Dorsolateral prefrontal cortex (tissue), 120 donors: ENCODE measurements at regions of chr7 and their contacts with region 1.

Region 1: GRCh38 chr7:38107486-38107893 is 70.6 kb upstream of the STARD3NL start:
- DNase-seq: peak in 8 of 10 donors; percentile 32 to 70 (median 55)
- H3K4me3 ChIP-seq: no peak overlapping the region
- H3K27ac ChIP-seq: no peak overlapping the region
- H3K27me3 ChIP-seq: no peaks in the 10 kb centered on the region
- CTCF ChIP-seq: peak; percentile 61 to 96 (median 83)

Region 2: DNA sequence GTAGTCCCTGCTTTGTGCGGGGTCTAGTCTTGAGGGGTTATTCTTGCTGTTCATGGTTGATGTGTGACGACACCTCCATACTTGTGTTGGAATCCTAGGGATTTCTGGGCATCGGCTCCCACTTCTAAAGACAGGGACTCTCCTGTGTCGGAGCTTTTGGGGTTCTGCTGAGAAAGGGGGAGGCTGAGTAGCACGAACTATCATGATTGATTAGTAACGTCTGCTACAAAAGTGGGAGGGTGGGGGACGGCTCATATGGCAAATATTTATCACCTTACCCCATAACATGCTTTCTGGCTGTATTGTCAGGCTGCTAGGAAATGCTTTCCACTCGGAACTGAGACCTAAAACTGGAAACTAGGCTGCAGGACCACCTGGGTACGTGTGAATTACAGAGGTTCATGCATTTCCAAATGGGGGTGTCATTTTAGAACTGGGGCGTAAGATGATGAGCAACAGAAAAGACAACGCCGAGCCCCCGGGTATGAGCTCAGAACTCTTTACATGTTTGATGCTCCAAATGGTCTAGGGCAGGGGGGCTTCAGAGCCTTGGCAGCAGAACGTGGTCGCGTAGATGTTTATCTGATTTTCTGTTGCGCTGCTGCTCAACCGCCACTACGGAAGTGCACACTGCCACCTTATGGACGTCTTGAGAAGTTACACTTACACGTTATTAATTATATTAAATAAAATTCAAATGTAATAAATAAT is 274.2 kb before region 1 on chr7:
- intact Hi-C with region 1: no loop called
- DNase-seq: peak in 7 of 10 donors; percentile 28 to 57 (median 38)
- H3K4me3 ChIP-seq: peak overlapping the region; percentile 22 to 71 (median 53)
- H3K27ac ChIP-seq: peak overlapping the region in 39 of 59 donors; percentile 4 to 88 (median 49)
- H3K27me3 ChIP-seq: peaks cover 0 to 4% (median 0%) of the 10 kb centered on the region in 45 donors
- CTCF ChIP-seq: peak; percentile 73 to 94 (median 84)

Region 3: GRCh38 chr7:37901236-37901827 is 206.2 kb before region 1 on chr7:
- intact Hi-C with region 1: loop called in 1 of 2 experiments (anchors 5 kb)
- DNase-seq: no peak
- H3K4me3 ChIP-seq: no peak overlapping the region
- H3K27ac ChIP-seq: no peak overlapping the region
- H3K27me3 ChIP-seq: no peaks in the 10 kb centered on the region
- CTCF ChIP-seq: peak; percentile 43 to 83 (median 66)

Region 4: DNA sequence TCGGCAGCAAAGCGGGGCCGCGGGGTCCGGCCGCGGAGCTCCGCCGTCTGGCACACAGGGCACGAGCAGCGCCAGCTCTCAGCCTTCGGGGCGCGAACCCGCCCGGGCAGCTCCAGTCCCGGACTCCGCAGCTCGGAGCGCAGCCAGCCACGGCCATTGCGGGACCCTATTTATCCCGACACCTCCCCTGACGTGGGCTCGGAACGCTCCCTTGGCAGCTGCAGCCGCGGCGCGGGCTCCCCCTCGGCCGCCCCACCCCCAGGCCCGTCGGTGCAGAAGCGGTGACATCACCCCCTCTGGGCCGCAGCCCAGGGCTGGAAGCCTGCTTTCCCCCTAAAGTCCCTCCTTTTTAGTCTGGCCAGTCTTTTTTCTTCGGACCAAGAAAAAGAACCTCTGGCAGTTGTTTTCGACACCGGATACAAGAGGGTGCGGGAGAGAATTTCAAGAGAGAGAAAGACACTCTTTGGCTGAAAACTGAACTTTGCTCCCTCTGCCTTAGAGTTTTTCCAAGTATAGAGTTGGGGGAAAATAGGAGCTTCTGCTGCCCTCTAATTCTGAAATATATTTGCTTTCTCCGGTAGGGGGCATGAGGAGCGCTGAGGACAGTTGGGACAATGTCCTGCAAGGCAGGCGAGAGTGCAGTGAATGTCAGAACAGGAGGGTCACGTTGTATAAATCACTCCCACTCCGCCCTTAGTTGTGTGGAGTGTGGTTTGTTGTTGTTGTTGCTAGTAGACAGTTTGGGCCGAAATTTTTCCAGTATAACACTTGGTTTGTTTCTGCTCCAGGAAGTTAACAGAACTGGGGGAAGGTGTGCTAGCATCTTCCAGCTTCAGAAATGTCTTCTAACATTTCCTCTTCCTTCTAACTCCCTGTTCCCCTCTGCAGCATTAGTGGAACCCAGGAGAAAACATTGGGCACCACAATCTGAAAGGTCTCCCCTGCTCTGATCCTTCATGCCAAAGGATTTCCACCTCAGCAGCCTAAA is 190.5 kb before region 1 on chr7 and contains the start of gene SFRP4:
- intact Hi-C with region 1: loop called (anchors 5 to 10 kb)
- DNase-seq: peak in 8 of 10 donors; percentile 28 to 56 (median 40)
- H3K4me3 ChIP-seq: peak within 1 kb of the TSS; percentile 37 to 72 (median 60)
- H3K27ac ChIP-seq: peak within 1 kb of the TSS in 15 of 59 donors; percentile 4 to 69 (median 41)
- H3K27me3 ChIP-seq: peaks cover 0 to 20% (median 4%) of the 10 kb centered on the region in 45 donors
- CTCF ChIP-seq: peak; percentile 23 to 77 (median 65)
- total RNA-seq, gene SFRP4: 0.19 to 4.9 (median 0.85) TPM in 110 of 120 experiments, not detected in the others

Region 5: GRCh38 chr7:38222481-38223096 is 115.1 kb after region 1 on chr7:
- intact Hi-C with region 1: loop called (anchors 2 to 5 kb)
- DNase-seq: peak in 1 of 10 donors; percentile 36
- H3K4me3 ChIP-seq: no peak overlapping the region
- H3K27ac ChIP-seq: peak overlapping the region in 3 of 59 donors; percentile 4 to 29 (median 25)
- H3K27me3 ChIP-seq: no peaks in the 10 kb centered on the region
- CTCF ChIP-seq: peak; percentile 73 to 95 (median 88)

Region 6: GRCh38 chr7:38318803-38319416 is 211.4 kb after region 1 on chr7:
- intact Hi-C with region 1: loop called (anchors 5 to 10 kb)
- DNase-seq: peak in 2 of 10 donors; percentile 38 to 55
- H3K4me3 ChIP-seq: no peak overlapping the region
- H3K27ac ChIP-seq: no peak overlapping the region
- H3K27me3 ChIP-seq: no peaks in the 10 kb centered on the region
- CTCF ChIP-seq: peak in 55 of 56 donors; percentile 25 to 79 (median 60)

Region 7: GRCh38 chr7:38369816-38370493 is 262.5 kb after region 1 on chr7:
- intact Hi-C with region 1: loop called in 1 of 2 experiments (anchors 10 kb)
- DNase-seq: peak; percentile 41 to 95 (median 88)
- H3K4me3 ChIP-seq: peak overlapping the region in 36 of 59 donors; percentile 3 to 55 (median 27)
- H3K27ac ChIP-seq: peak overlapping the region in 11 of 59 donors; percentile 3 to 62 (median 23)
- H3K27me3 ChIP-seq: no peaks in the 10 kb centered on the region
- CTCF ChIP-seq: peak; percentile 36 to 93 (median 84)